CD14-positive monocyte (primary cell): ENCODE measurements at regions of chr7 and their contacts with region 1.

Region 1: DNA sequence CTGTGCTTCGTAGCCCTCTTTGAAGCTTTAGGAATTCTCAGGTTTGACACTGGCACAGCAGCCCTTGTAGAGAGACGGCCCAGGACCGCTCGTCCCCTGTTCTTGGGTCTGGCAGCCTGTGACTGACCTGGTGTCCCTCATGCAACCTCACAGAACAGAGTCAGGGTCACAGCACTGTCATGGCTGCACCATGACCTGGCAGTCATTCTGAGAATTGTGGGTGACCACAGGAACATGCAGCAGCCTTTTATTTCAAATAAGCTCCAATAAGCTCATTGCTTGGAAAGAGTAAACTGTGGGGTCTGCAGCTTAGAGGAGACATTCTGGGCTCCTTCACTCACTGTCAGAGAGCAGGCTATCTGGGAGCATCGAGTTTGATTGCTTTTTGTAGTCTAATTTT is 42.5 kb downstream of the MYO1G start:
- DNase-seq: no peak
- H3K4me3 ChIP-seq: no peak overlapping the region
- H3K4me3 Mint-ChIP-seq: no peak overlapping the region
- H3K27ac ChIP-seq: no peak overlapping the region
- H3K27ac Mint-ChIP-seq: no peak overlapping the region
- H3K4me1 ChIP-seq: peaks cover 19 to 20% of the 10 kb centered on the region in 2 donors
- H3K4me1 Mint-ChIP-seq: peaks cover 21% of the 10 kb centered on the region
- H3K27me3 ChIP-seq: no peaks in the 10 kb centered on the region
- H3K27me3 Mint-ChIP-seq: peaks cover 1 to 2% (median 2%) of the 10 kb centered on the region in 3 donors
- CTCF ChIP-seq: no peak

Region 2: GRCh38 chr7:44769776-44770662 is 166.3 kb before region 1 on chr7:
- intact Hi-C with region 1: loop called in 1 of 2 experiments (anchors 10 kb)
- DNase-seq: peak; percentile 36 to 40 (median 38)
- H3K4me3 ChIP-seq: peak overlapping the region in 1 of 3 experiments; percentile 32
- H3K4me3 Mint-ChIP-seq: peak overlapping the region; percentile 68 to 77
- H3K27ac ChIP-seq: peak overlapping the region; percentile 16 to 39
- H3K27ac Mint-ChIP-seq: peak overlapping the region; percentile 33 to 89 (median 83)
- H3K4me1 ChIP-seq: peaks cover 35 to 38% of the 10 kb centered on the region in 2 donors
- H3K4me1 Mint-ChIP-seq: peaks cover 40% of the 10 kb centered on the region
- H3K27me3 ChIP-seq: no peaks in the 10 kb centered on the region
- H3K27me3 Mint-ChIP-seq: peaks cover 9 to 10% (median 9%) of the 10 kb centered on the region in 3 donors
- CTCF ChIP-seq: no peak

Region 3: DNA sequence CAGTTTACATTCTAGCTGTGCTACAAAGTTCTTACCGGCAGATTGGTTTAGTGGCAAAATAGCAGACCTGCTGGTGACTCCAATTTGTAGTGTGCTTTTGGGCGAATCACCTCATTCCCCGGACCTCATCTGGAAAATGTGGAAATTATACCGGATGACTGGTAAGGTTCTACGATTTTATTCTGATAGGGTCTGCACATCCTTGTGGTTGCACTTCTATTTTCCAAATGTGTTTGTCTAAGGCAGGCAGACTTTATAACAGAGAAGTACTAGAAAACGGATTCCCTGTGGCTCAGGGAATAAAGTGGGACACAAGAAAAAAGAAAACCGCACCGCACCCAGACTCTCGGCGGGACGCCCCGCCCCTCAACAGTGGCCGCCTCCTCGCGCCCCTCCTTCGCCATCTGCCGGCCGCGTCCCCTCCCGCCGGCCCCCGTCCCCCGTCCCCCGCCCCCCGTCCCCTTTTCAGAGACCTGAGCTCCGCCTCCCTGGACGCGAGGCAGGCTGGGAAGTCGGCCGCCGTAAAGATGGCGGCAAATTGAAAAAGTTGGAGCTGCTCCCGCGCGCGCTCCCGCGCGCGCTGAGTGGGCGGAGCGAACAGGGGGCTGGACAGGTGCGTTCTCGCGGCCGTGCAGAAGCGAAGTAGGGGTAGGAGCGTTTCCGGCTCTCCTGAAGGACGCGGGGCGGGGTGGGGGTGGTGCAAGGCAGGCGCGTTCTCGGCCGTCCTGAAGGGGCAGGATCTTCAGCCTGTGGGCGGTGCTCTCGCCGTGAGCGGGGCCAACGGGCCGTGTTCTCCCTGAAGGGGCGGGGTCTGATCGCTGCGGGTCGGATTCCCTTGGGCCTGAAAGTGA is 63.1 kb after region 1 on chr7:
- intact Hi-C with region 1: no loop called
- DNase-seq: peak; percentile 94 to 98 (median 97)
- H3K4me3 ChIP-seq: peak overlapping the region; percentile 48 to 88 (median 83)
- H3K4me3 Mint-ChIP-seq: peak overlapping the region; percentile 97 to 98
- H3K27ac ChIP-seq: peak overlapping the region; percentile 75 to 86
- H3K27ac Mint-ChIP-seq: peak overlapping the region; percentile 91 to 99 (median 98)
- H3K4me1 ChIP-seq: peaks cover 21 to 34% of the 10 kb centered on the region in 2 donors
- H3K4me1 Mint-ChIP-seq: peaks cover 33% of the 10 kb centered on the region
- H3K27me3 ChIP-seq: no peaks in the 10 kb centered on the region
- H3K27me3 Mint-ChIP-seq: no peaks in the 10 kb centered on the region
- CTCF ChIP-seq: no peak